CD8-positive, alpha-beta T cell (primary cell): ENCODE measurements at regions of chr11 and their contacts with region 1.

Region 1: GRCh38 chr11:9314291-9315036 is at the start of gene TMEM41B:
- DNase-seq: peak; percentile 98 to 100 (median 100)
- ATAC-seq: peak; percentile 96
- H3K4me3 ChIP-seq: peak within 1 kb of the TSS; percentile 85 to 99
- H3K4me3 Mint-ChIP-seq: peak within 1 kb of the TSS; percentile 98
- H3K27ac ChIP-seq: peak within 1 kb of the TSS; percentile 87 to 97
- H3K27ac Mint-ChIP-seq: peak within 1 kb of the TSS; percentile 98
- H3K4me1 ChIP-seq: peaks cover 29% of the 10 kb centered on the region
- H3K4me1 Mint-ChIP-seq: peaks cover 35% of the 10 kb centered on the region
- H3K27me3 ChIP-seq: no peaks in the 10 kb centered on the region
- H3K27me3 Mint-ChIP-seq: peaks cover 2% of the 10 kb centered on the region
- CTCF ChIP-seq: no peak
- total RNA-seq, gene TMEM41B: 36.8 TPM

Region 2: DNA sequence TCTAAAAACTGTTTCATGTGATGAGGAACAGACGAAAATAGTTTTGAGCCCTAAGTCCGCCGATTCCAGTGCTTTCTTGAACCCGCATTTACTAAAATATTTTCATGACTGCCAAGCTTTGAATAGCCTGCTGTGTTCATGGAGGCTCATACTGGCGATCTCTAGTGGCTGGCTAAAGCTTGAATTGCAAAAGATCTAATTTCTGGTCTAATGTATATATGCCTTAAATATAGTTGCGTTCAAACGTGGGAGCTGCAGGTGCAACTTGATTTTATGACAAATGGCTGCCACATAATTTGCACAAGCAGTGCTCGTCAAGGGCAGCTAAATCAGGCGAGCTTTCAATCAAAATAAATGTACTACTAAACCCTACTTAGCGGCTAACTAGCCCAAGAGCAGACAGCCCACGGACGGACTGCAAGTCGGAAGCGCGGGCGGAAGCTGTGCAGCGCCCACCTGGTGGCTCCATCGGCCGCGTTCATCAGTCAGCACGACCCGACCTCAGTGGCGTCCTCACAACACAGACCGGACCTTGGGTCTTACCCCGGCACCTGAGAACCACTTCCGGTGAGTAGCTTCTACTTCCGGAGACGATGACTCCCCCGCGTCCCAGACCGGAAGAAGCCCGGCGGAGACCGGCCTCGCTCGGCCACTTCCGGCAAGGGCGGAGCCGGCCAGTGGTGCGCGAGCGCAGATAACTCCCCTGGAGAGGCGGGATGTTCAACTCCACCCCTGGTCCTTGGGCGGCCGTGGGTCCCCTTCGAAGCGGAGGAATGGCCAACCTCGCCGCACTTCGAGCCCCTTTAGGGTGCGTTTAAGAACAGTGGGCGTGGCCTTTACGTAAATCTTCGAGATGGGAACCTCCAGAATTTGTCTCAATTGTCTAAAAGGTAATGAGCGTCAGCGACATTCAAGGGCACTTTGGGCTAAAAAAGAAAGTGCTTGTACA is 625.8 kb before region 1 on chr11:
- CTCF ChIA-PET with region 1: no interaction called
- POLR2A ChIA-PET with region 1: no interaction called
- intact Hi-C with region 1: loop called (anchors 5 to 10 kb)
- DNase-seq: peak; percentile 51 to 90 (median 80)
- ATAC-seq: peak; percentile 78
- H3K4me3 ChIP-seq: peak overlapping the region; percentile 78 to 79
- H3K4me3 Mint-ChIP-seq: peak overlapping the region; percentile 93
- H3K27ac ChIP-seq: peak overlapping the region; percentile 71 to 83
- H3K27ac Mint-ChIP-seq: peak overlapping the region; percentile 93
- H3K4me1 ChIP-seq: peaks cover 29% of the 10 kb centered on the region
- H3K4me1 Mint-ChIP-seq: peaks cover 41% of the 10 kb centered on the region
- H3K27me3 ChIP-seq: no peaks in the 10 kb centered on the region
- H3K27me3 Mint-ChIP-seq: no peaks in the 10 kb centered on the region
- CTCF ChIP-seq: no peak

Region 3: GRCh38 chr11:9003573-9004309 is 310.7 kb before region 1 on chr11 and contains the start of gene NRIP3:
- CTCF ChIA-PET with region 1: no interaction called
- POLR2A ChIA-PET with region 1: no interaction called
- intact Hi-C with region 1: loop called in 1 of 2 experiments (anchors 5 kb)
- DNase-seq: peak; percentile 58 to 91 (median 82)
- ATAC-seq: peak; percentile 92
- H3K4me3 ChIP-seq: peak within 1 kb of the TSS; percentile 47 to 66
- H3K4me3 Mint-ChIP-seq: peak within 1 kb of the TSS; percentile 76
- H3K27ac ChIP-seq: no peak within 1 kb of the TSS
- H3K27ac Mint-ChIP-seq: peak within 1 kb of the TSS; percentile 24
- H3K4me1 ChIP-seq: peaks cover 10% of the 10 kb centered on the region
- H3K4me1 Mint-ChIP-seq: peaks cover 15% of the 10 kb centered on the region
- H3K27me3 ChIP-seq: peaks cover 7 to 24% of the 10 kb centered on the region in 2 experiments
- H3K27me3 Mint-ChIP-seq: peaks cover 32% of the 10 kb centered on the region
- CTCF ChIP-seq: no peak
- total RNA-seq, gene NRIP3: 8.8 to 10.1 TPM

Region 4: DNA sequence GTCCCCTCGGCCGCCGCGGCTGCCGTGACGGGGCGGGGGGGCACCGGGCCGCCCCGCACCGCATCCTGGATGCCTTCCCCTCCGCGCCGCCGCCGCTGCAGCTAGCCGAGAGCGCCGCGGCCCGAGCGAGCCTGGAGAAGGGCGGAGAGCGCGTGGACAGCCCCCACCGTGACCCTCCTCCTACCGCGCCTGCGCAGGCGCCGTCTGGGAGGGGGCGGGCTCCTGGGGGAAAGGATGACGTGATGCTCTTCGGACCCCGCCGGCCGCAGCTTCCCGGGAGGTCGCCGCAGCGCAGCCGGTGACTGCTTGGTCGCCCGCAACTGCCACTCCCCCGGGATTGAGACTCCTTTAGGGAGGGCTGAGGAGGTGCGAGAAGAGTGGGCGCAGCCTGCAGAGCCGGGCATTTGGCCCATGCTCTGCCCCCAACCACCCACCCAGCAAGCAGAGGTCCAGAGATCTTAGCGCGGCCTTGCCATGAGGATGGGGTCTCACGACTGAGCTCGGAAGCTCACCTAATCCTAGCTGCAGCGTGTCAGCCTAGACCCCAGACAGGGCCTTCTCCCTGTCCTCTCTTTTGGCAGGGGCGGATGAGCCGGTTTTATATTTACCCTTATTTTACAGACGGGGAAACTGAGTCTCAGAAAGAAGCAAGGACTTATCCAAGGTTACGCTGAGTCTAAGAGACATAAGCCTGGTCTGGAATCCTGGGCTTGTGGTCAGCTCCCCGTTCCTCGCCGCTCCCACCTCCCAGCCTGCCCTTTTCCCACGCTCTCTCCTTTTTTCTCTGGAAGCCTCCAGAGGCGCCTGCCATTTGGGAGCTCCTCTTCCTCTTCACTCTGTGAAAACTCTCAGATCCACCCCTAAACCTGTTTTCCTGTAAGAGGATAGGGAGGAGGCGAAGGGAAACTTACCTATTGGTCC is 49.0 kb before region 1 on chr11 and contains the start of gene DENND5A:
- CTCF ChIA-PET with region 1: interaction called, 4 read pairs
- POLR2A ChIA-PET with region 1: interaction called, 8 read pairs
- intact Hi-C with region 1: loop called (anchors 1 to 2 kb)
- DNase-seq: peak; percentile 12 to 74 (median 52)
- ATAC-seq: peak; percentile 44
- H3K4me3 ChIP-seq: peak within 1 kb of the TSS; percentile 71 to 79
- H3K4me3 Mint-ChIP-seq: peak within 1 kb of the TSS; percentile 98
- H3K27ac ChIP-seq: peak within 1 kb of the TSS; percentile 45 to 71
- H3K27ac Mint-ChIP-seq: peak within 1 kb of the TSS; percentile 97
- H3K4me1 ChIP-seq: peaks cover 23% of the 10 kb centered on the region
- H3K4me1 Mint-ChIP-seq: peaks cover 35% of the 10 kb centered on the region
- H3K27me3 ChIP-seq: no peaks in the 10 kb centered on the region
- H3K27me3 Mint-ChIP-seq: no peaks in the 10 kb centered on the region
- CTCF ChIP-seq: no peak
- total RNA-seq, gene DENND5A: 78.8 to 81.7 TPM

Region 5: DNA sequence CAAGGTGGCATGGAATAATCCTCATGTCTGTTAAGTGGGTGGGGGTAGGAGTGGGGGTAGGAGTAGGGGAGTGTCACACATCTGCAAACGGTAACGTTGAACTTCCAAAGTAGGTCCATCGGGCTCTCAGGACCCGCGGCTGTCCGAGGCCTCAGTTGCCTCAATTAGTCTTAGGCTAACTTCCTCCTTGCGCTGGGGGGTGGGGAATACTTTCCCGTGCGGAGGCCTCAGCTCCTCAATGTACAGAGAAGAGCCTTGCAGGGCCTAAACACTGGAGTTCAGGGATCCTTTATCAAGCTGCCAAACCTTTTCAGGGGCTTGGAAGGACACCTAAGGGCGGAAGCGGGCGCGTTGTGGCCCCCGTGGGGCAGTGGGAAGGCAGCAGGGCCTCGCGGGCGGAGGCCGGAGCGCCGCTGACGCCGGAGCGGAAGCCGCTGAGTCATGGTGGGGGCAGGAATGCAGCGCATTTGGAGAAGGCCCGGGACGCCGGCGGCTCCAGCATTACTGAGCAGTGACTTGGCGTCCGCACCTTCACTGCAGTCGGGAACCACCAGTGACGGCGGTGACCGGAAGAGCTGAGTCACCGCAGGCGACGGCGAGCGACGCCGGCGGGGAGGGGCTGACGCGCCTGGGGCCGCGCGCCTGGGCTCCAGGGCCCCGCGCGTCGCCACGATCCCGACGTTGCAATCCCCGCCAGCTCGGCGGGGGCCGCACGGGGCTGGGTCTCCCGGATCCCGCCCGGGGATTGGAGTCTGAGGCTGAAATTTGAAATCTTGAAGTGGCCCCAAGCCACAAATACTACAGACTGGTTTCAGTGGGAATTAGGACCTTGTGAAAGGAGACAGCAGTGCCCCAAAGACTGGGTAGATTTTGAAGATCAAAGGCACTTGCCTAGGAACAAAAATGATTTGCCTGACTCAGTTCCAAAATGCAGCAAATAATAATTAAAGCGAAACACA is 49.8 kb after region 1 on chr11:
- CTCF ChIA-PET with region 1: no interaction called
- POLR2A ChIA-PET with region 1: interaction called, 3 read pairs
- intact Hi-C with region 1: loop called (anchors 1 kb)
- DNase-seq: peak; percentile 43 to 91 (median 76)
- ATAC-seq: peak; percentile 88
- H3K4me3 ChIP-seq: peak overlapping the region; percentile 60 to 66
- H3K4me3 Mint-ChIP-seq: peak overlapping the region; percentile 87
- H3K27ac ChIP-seq: peak overlapping the region; percentile 61 to 93
- H3K27ac Mint-ChIP-seq: peak overlapping the region; percentile 85
- H3K4me1 ChIP-seq: peaks cover 10% of the 10 kb centered on the region
- H3K4me1 Mint-ChIP-seq: peaks cover 14% of the 10 kb centered on the region
- H3K27me3 ChIP-seq: no peaks in the 10 kb centered on the region
- H3K27me3 Mint-ChIP-seq: no peaks in the 10 kb centered on the region
- CTCF ChIP-seq: no peak

Region 6: GRCh38 chr11:9489080-9489765 is 174.8 kb after region 1 on chr11:
- CTCF ChIA-PET with region 1: no interaction called
- POLR2A ChIA-PET with region 1: no interaction called
- intact Hi-C with region 1: no loop called
- DNase-seq: no peak
- ATAC-seq: no peak
- H3K4me3 ChIP-seq: no peak overlapping the region
- H3K4me3 Mint-ChIP-seq: no peak overlapping the region
- H3K27ac ChIP-seq: no peak overlapping the region
- H3K27ac Mint-ChIP-seq: peak overlapping the region; percentile 30
- H3K4me1 ChIP-seq: no peaks in the 10 kb centered on the region
- H3K4me1 Mint-ChIP-seq: peaks cover 2% of the 10 kb centered on the region
- H3K27me3 ChIP-seq: no peaks in the 10 kb centered on the region
- H3K27me3 Mint-ChIP-seq: no peaks in the 10 kb centered on the region
- CTCF ChIP-seq: no peak

Region 7: DNA sequence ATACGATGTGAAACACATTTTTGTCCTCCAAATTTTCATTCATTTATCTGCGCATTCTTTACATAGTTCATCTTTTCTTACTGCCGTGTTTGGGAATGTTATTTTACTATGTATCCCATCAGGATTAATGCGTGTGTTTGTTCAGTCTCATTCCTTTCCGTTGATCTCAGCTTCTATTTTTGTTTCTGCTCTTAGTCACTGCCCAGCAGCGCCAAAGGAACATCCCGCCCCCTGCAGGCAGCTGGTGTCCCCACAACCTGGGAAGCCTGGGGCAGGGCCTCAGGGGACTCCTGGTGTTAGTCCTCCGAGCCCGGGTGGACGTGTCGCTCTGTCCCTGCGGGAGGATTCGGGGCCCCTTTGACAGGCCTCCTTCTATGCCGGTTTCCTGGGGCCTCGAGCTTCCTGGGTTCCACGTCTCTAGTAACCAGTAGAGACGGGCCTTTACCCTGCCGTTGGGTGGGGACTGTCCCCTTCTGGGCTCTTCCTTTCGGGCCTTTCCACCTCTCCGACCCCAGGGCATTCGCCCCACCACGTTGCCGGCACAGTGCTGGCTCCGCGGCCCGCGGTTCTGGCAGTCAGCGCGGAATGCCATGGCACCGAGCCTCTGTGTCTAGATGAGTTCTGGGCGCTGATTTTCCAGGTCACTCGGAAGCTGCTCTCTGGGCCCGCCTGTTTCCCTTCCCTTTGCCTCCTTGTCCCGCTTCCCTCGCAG is 298.8 kb after region 1 on chr11:
- CTCF ChIA-PET with region 1: no interaction called
- POLR2A ChIA-PET with region 1: no interaction called
- intact Hi-C with region 1: loop called in 1 of 2 experiments (anchors 1 kb)
- DNase-seq: peak; percentile 70 to 90 (median 84)
- ATAC-seq: peak; percentile 49
- H3K4me3 ChIP-seq: peak overlapping the region; percentile 69 to 70
- H3K4me3 Mint-ChIP-seq: peak overlapping the region; percentile 97
- H3K27ac ChIP-seq: peak overlapping the region; percentile 49 to 88
- H3K27ac Mint-ChIP-seq: peak overlapping the region; percentile 94
- H3K4me1 ChIP-seq: peaks cover 12% of the 10 kb centered on the region
- H3K4me1 Mint-ChIP-seq: peaks cover 16% of the 10 kb centered on the region
- H3K27me3 ChIP-seq: no peaks in the 10 kb centered on the region
- H3K27me3 Mint-ChIP-seq: no peaks in the 10 kb centered on the region
- CTCF ChIP-seq: peak; percentile 79